HCT116 (cell line): ENCODE measurements at regions of chr9 and their contacts with region 1.

Region 1: GRCh38 chr9:109401168-109401989 is 80.5 kb upstream of the EPB41L4B start:
- DNase-seq: peak; percentile 49
- ATAC-seq: peak; percentile 99
- H3K4me3 ChIP-seq: no peak overlapping the region
- H3K27ac ChIP-seq: no peak overlapping the region
- H3K4me1 ChIP-seq: no peaks in the 10 kb centered on the region
- H3K27me3 ChIP-seq: no peaks in the 10 kb centered on the region
- CTCF ChIP-seq: peak; percentile 82 to 93 (median 82)
- POLR2A ChIP-seq: no peak
- RAD21 ChIP-seq: peak; percentile 71

Region 2: DNA sequence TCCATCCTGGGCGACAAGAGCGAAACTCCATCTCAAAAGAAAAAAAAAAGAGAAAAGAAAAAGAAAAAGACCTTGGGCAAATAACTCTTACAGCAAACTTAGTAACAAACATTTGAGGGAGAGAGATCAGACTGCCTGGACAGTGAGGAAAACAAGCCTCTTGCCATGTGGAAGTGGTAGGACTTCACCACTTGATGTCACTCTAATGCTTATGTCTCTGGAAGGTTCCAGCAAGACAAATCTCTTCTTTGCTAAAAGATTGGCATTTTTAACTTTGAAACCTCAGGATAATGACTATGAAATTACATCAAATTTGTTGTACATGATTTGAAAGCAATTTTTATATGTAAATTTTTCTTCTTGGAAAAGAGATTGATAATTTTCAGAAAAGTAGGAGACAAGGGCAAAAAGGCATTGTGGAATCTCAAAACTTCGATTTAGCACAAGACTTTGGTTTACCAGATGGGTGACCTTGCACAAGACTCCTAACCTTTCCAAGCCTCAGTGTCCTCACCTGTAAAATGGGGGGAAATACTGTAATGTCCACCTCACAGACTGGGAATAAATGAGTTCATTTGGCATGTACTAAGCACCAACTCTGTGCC is 551.0 kb before region 1 on chr9:
- CTCF ChIA-PET with region 1: interaction called, 3 read pairs
- POLR2A ChIA-PET with region 1: no interaction called
- RAD21 ChIA-PET with region 1: no interaction called
- intact Hi-C with region 1: loop called (anchors 5 kb)
- DNase-seq: peak; percentile 10
- ATAC-seq: peak; percentile 67
- H3K4me3 ChIP-seq: no peak overlapping the region
- H3K27ac ChIP-seq: no peak overlapping the region
- H3K4me1 ChIP-seq: no peaks in the 10 kb centered on the region
- H3K27me3 ChIP-seq: no peaks in the 10 kb centered on the region
- CTCF ChIP-seq: peak; percentile 39 to 50 (median 44); a peak in 3 of 6 replicates
- POLR2A ChIP-seq: no peak
- RAD21 ChIP-seq: peak; percentile 77

Region 3: GRCh38 chr9:109192732-109193361 is 208.5 kb before region 1 on chr9:
- CTCF ChIA-PET with region 1: no interaction called
- POLR2A ChIA-PET with region 1: no interaction called
- RAD21 ChIA-PET with region 1: no interaction called
- intact Hi-C with region 1: loop called (anchors 2 kb)
- DNase-seq: peak; percentile 15
- ATAC-seq: peak; percentile 81
- H3K4me3 ChIP-seq: no peak overlapping the region
- H3K27ac ChIP-seq: no peak overlapping the region
- H3K4me1 ChIP-seq: no peaks in the 10 kb centered on the region
- H3K27me3 ChIP-seq: no peaks in the 10 kb centered on the region
- CTCF ChIP-seq: peak; percentile 61 to 69 (median 61); a peak in 5 of 6 replicates
- POLR2A ChIP-seq: no peak
- RAD21 ChIP-seq: peak; percentile 83